ENCODE measurements at regions of chr2 and their contacts with region 1.

Region 1: DNA sequence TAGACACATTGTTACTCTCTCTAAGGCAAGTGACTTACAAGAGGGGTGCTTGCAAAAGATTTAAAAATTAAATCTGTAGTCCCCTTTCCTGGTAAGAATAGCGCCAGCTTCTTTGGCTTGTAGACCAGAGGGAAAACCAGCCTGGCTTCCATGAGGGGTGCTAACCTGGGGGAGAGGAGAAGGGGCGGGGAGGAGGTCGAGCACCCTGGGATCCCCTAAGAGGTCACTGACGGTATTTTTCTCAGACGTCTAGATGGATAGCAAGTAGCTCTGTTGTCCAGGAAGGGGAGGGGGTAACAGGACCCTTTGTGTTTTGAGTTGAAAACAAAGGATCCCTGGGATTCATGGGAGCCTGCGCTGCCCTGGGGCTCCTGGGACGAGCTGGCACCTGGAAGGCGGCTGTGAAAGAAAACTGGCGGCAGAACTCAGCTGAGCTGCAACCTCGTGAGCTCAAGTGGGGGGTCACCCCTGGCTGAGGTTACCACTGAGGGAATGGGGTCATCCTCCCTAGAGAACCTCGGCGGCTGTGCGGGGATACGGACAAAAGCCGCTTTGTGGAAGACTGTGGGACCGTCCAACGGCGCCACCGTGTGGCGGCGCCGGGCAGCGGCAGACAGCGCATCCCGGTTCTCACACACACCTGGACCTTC is 37.8 kb upstream of the MRPL19 start:
- DNase-seq: peak; percentile 10 to 72 (median 52)
- ATAC-seq: peak; percentile 81
- H3K4me3 ChIP-seq: no peak overlapping the region
- H3K4me3 Mint-ChIP-seq: no peak overlapping the region
- H3K27ac ChIP-seq: no peak overlapping the region
- H3K27ac Mint-ChIP-seq: no peak overlapping the region
- H3K4me1 ChIP-seq: peaks cover 4% of the 10 kb centered on the region
- H3K4me1 Mint-ChIP-seq: no peaks in the 10 kb centered on the region
- H3K27me3 ChIP-seq: peaks cover 0 to 5% of the 10 kb centered on the region in 2 experiments
- H3K27me3 Mint-ChIP-seq: peaks cover 53% of the 10 kb centered on the region
- CTCF ChIP-seq: peak; percentile 91

Region 2: DNA sequence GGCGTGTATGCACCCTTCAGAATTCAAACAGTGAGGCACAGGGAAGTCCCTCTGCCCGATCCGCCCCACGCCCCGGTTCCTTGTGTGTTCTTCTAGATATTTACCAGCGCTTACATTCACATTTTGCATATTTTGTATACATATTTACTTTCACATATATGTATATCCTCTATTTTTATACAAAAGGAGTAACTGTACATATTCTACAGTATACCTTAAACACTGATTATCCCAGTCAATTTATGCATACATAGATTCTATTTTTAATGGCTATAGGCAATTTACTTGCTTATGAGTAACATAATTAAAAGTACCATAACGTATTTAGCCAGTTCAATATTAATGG is 1828.6 kb before region 1 on chr2:
- CTCF ChIA-PET with region 1: no interaction called
- POLR2A ChIA-PET with region 1: no interaction called
- intact Hi-C with region 1: no loop called
- DNase-seq: no peak
- ATAC-seq: no peak
- H3K4me3 ChIP-seq: peak overlapping the region; percentile 90 to 97
- H3K4me3 Mint-ChIP-seq: peak overlapping the region; percentile 97
- H3K27ac ChIP-seq: peak overlapping the region; percentile 87 to 93
- H3K27ac Mint-ChIP-seq: peak overlapping the region; percentile 99
- H3K4me1 ChIP-seq: peaks cover 21% of the 10 kb centered on the region
- H3K4me1 Mint-ChIP-seq: peaks cover 35% of the 10 kb centered on the region
- H3K27me3 ChIP-seq: no peaks in the 10 kb centered on the region
- H3K27me3 Mint-ChIP-seq: peaks cover 5% of the 10 kb centered on the region
- CTCF ChIP-seq: no peak

Region 3: DNA sequence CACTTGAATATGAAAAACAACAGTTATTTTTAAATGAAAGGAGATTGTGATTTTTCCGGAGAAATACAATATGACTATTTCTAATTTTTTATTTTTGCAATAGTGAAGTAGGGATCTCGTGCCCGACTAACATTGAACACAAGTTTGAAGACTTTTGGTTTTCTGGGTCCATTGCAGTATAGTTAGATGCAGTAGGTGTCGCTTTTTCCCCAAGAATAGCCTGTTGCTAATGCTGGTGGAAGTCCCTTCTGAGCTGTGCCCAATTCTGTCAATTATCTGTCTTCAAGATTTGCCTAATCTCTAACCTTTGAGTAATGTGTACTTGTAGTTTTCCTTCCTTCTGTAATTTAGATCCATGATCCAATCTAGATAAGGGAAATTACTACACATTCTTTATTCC is 918.2 kb before region 1 on chr2:
- CTCF ChIA-PET with region 1: interaction called, 3 read pairs
- POLR2A ChIA-PET with region 1: no interaction called
- intact Hi-C with region 1: loop called in 1 of 2 experiments (anchors 5 kb)
- DNase-seq: peak in 2 of 9 experiments; percentile 41 to 54
- ATAC-seq: peak; percentile 54
- H3K4me3 ChIP-seq: no peak overlapping the region
- H3K4me3 Mint-ChIP-seq: no peak overlapping the region
- H3K27ac ChIP-seq: no peak overlapping the region
- H3K27ac Mint-ChIP-seq: no peak overlapping the region
- H3K4me1 ChIP-seq: no peaks in the 10 kb centered on the region
- H3K4me1 Mint-ChIP-seq: no peaks in the 10 kb centered on the region
- H3K27me3 ChIP-seq: no peaks in the 10 kb centered on the region
- H3K27me3 Mint-ChIP-seq: no peaks in the 10 kb centered on the region
- CTCF ChIP-seq: peak; percentile 51

Region 4: GRCh38 chr2:74919827-74920226 is 689.0 kb before region 1 on chr2:
- CTCF ChIA-PET with region 1: interaction called, 38 read pairs
- POLR2A ChIA-PET with region 1: no interaction called
- intact Hi-C with region 1: loop called in 1 of 2 experiments (anchors 1 kb)
- DNase-seq: peak; percentile 56 to 83 (median 76)
- ATAC-seq: peak; percentile 89
- H3K4me3 ChIP-seq: peak overlapping the region in 1 of 2 experiments; percentile 25
- H3K4me3 Mint-ChIP-seq: peak overlapping the region; percentile 64
- H3K27ac ChIP-seq: no peak overlapping the region
- H3K27ac Mint-ChIP-seq: no peak overlapping the region
- H3K4me1 ChIP-seq: no peaks in the 10 kb centered on the region
- H3K4me1 Mint-ChIP-seq: peaks cover 6% of the 10 kb centered on the region
- H3K27me3 ChIP-seq: no peaks in the 10 kb centered on the region
- H3K27me3 Mint-ChIP-seq: peaks cover 13% of the 10 kb centered on the region
- CTCF ChIP-seq: peak; percentile 85

Region 5: DNA sequence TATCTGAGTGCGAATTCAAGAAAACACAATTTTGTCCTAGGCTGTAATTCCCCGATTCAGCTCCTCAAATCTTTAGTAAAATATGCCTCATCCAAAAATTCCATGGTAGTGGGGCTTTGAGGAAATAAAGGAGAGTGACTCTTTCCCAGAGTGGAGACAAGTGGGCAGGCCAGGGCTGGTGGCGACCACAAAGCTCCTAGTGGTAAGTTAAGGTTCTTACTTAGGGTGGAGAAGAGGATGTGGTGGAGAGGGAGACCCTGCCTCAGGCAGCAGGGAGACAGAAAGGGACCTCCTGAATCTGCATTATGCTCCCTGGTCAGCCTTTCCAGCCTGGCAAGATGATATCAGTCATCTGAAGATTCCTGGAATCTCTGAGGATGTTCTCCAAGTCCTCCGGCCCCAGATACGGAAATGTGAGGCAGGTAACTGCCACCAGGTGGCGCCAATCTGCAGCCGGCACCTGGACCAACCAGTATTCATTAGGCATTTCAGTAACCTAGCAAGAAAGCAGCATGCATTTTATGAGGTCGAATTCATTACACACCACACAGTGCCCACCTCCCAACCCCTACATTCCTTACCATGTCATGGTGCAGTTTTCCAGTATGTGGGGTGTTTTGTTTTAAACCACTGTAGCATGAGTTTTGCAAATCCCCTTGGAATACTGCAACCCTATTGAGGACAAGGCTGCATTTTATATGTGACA is 544.0 kb before region 1 on chr2:
- CTCF ChIA-PET with region 1: interaction called, 6 read pairs
- POLR2A ChIA-PET with region 1: no interaction called
- intact Hi-C with region 1: loop called in 1 of 2 experiments (anchors 5 kb)
- DNase-seq: peak; percentile 18 to 63 (median 43)
- ATAC-seq: no peak
- H3K4me3 ChIP-seq: no peak overlapping the region
- H3K4me3 Mint-ChIP-seq: no peak overlapping the region
- H3K27ac ChIP-seq: no peak overlapping the region
- H3K27ac Mint-ChIP-seq: no peak overlapping the region
- H3K4me1 ChIP-seq: no peaks in the 10 kb centered on the region
- H3K4me1 Mint-ChIP-seq: no peaks in the 10 kb centered on the region
- H3K27me3 ChIP-seq: no peaks in the 10 kb centered on the region
- H3K27me3 Mint-ChIP-seq: peaks cover 2% of the 10 kb centered on the region
- CTCF ChIP-seq: peak; percentile 67

Region 6: DNA sequence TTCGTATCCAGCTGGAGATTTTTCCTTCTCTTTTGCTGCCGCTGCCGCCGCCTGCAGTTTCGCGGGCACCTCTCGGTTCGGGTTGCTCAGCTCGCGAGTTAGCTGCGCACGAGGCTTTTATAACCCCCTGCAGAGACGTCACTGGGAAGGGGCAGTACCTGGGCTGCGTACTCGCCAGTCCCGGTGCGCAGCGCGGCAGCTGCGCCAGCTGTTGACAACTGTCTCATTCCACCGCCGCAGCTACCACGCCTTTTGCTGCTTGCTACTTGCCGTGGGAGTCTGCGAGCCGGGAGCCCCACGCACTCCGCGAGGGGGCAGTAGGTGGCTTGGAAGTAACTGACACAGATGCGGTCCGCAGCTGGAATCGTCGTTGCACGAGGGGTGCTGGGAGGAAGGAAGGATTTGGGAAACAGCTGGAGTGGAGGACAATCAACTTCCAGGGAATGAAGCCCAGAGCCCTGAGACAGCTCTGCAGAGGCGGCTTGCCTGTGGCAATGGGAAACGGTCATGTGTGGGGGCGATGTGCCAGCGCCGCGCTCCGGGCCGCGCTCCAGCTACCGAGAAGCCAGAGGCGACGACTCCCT is 409.3 kb before region 1 on chr2 and contains the start of gene TACR1:
- CTCF ChIA-PET with region 1: no interaction called
- POLR2A ChIA-PET with region 1: no interaction called
- intact Hi-C with region 1: loop called in 1 of 2 experiments (anchors 5 kb)
- DNase-seq: peak in 8 of 9 experiments; percentile 5 to 64 (median 45)
- ATAC-seq: peak; percentile 89
- H3K4me3 ChIP-seq: peak within 1 kb of the TSS in 1 of 2 experiments; percentile 26
- H3K4me3 Mint-ChIP-seq: peak within 1 kb of the TSS; percentile 69
- H3K27ac ChIP-seq: no peak within 1 kb of the TSS
- H3K27ac Mint-ChIP-seq: no peak within 1 kb of the TSS
- H3K4me1 ChIP-seq: peaks cover 4% of the 10 kb centered on the region
- H3K4me1 Mint-ChIP-seq: peaks cover 14% of the 10 kb centered on the region
- H3K27me3 ChIP-seq: peaks cover 4 to 15% of the 10 kb centered on the region in 2 experiments
- H3K27me3 Mint-ChIP-seq: peaks cover 66% of the 10 kb centered on the region
- CTCF ChIP-seq: no peak
- total RNA-seq, gene TACR1: 0.05 to 0.08 TPM

Region 7: GRCh38 chr2:75466708-75467311 is 142.0 kb before region 1 on chr2:
- CTCF ChIA-PET with region 1: no interaction called
- POLR2A ChIA-PET with region 1: no interaction called
- intact Hi-C with region 1: loop called in 1 of 2 experiments (anchors 10 kb)
- DNase-seq: peak in 3 of 9 experiments; percentile 6 to 32 (median 13)
- ATAC-seq: no peak
- H3K4me3 ChIP-seq: no peak overlapping the region
- H3K4me3 Mint-ChIP-seq: no peak overlapping the region
- H3K27ac ChIP-seq: no peak overlapping the region
- H3K27ac Mint-ChIP-seq: no peak overlapping the region
- H3K4me1 ChIP-seq: no peaks in the 10 kb centered on the region
- H3K4me1 Mint-ChIP-seq: no peaks in the 10 kb centered on the region
- H3K27me3 ChIP-seq: no peaks in the 10 kb centered on the region
- H3K27me3 Mint-ChIP-seq: peaks cover 11% of the 10 kb centered on the region
- CTCF ChIP-seq: peak; percentile 44

Region 8: GRCh38 chr2:75619956-75620740 is 11.3 kb after region 1 on chr2:
- CTCF ChIA-PET with region 1: interaction called, 17 read pairs
- POLR2A ChIA-PET with region 1: no interaction called
- intact Hi-C with region 1: no loop called
- DNase-seq: no peak
- ATAC-seq: no peak
- H3K4me3 ChIP-seq: no peak overlapping the region
- H3K4me3 Mint-ChIP-seq: no peak overlapping the region
- H3K27ac ChIP-seq: no peak overlapping the region
- H3K27ac Mint-ChIP-seq: no peak overlapping the region
- H3K4me1 ChIP-seq: no peaks in the 10 kb centered on the region
- H3K4me1 Mint-ChIP-seq: no peaks in the 10 kb centered on the region
- H3K27me3 ChIP-seq: no peaks in the 10 kb centered on the region
- H3K27me3 Mint-ChIP-seq: peaks cover 17% of the 10 kb centered on the region
- CTCF ChIP-seq: no peak

Measured in CD8-positive, alpha-beta T cell (primary cell).